ENCODE measurements at regions of chr18 and their contacts with region 1.

Region 1: GRCh38 chr18:48675352-48675761 is 136.5 kb downstream of the CTIF start:
- DNase-seq: peak; percentile 85
- ATAC-seq: peak; percentile 93
- H3K4me3 ChIP-seq: no peak overlapping the region
- H3K4me3 Mint-ChIP-seq: no peak overlapping the region
- H3K27ac ChIP-seq: no peak overlapping the region
- H3K27ac Mint-ChIP-seq: no peak overlapping the region
- H3K4me1 ChIP-seq: peaks cover 4 to 12% of the 10 kb centered on the region in 2 donors
- H3K4me1 Mint-ChIP-seq: peaks cover 10% of the 10 kb centered on the region
- H3K27me3 ChIP-seq: no peaks in the 10 kb centered on the region
- H3K27me3 Mint-ChIP-seq: no peaks in the 10 kb centered on the region
- CTCF ChIP-seq: peak; percentile 95

Region 2: DNA sequence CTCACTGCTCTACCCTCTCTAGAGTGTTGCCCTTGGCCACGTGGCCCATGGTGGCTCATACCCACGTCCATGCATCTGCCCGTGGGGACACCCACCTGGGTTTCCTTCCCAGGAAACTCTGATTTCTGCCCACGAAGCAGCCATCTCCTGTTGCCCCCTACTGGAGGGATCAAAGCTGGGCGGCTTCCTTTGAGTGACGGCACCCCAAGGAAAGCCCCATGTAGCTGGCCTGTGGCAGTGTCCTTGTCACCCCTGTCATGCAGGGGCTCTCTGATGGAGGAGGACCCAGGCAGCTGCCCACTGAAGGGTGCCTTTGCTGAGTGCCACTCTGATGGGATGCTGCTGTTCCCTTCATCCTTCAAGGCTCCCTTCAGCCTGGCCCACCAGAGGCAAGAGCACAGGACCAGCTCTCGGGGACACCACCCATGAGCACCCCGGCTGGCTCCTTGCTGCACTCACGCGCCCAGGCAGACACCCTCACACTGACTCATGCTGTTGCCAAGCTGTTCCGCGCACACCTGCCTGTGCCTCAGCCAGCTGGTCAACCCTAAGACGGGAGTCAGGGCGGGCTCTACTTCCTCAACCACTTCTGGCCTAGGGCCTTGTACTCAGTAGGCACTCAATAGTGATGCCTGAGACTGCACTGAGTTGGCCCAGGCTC is 35.5 kb before region 1 on chr18:
- CTCF ChIA-PET with region 1: no interaction called
- POLR2A ChIA-PET with region 1: no interaction called
- intact Hi-C with region 1: no loop called
- DNase-seq: no peak
- ATAC-seq: no peak
- H3K4me3 ChIP-seq: no peak overlapping the region
- H3K4me3 Mint-ChIP-seq: no peak overlapping the region
- H3K27ac ChIP-seq: no peak overlapping the region
- H3K27ac Mint-ChIP-seq: no peak overlapping the region
- H3K4me1 ChIP-seq: no peaks in the 10 kb centered on the region
- H3K4me1 Mint-ChIP-seq: no peaks in the 10 kb centered on the region
- H3K27me3 ChIP-seq: no peaks in the 10 kb centered on the region
- H3K27me3 Mint-ChIP-seq: no peaks in the 10 kb centered on the region
- CTCF ChIP-seq: no peak

Region 3: GRCh38 chr18:48913201-48913600 is 237.8 kb after region 1 on chr18:
- CTCF ChIA-PET with region 1: no interaction called
- POLR2A ChIA-PET with region 1: no interaction called
- intact Hi-C with region 1: loop called (anchors 1 kb)
- DNase-seq: peak; percentile 37
- ATAC-seq: peak; percentile 63
- H3K4me3 ChIP-seq: no peak overlapping the region
- H3K4me3 Mint-ChIP-seq: no peak overlapping the region
- H3K27ac ChIP-seq: no peak overlapping the region
- H3K27ac Mint-ChIP-seq: no peak overlapping the region
- H3K4me1 ChIP-seq: peaks cover 0 to 6% of the 10 kb centered on the region in 2 donors
- H3K4me1 Mint-ChIP-seq: peaks cover 8% of the 10 kb centered on the region
- H3K27me3 ChIP-seq: no peaks in the 10 kb centered on the region
- H3K27me3 Mint-ChIP-seq: no peaks in the 10 kb centered on the region
- CTCF ChIP-seq: peak; percentile 16

Region 4: DNA sequence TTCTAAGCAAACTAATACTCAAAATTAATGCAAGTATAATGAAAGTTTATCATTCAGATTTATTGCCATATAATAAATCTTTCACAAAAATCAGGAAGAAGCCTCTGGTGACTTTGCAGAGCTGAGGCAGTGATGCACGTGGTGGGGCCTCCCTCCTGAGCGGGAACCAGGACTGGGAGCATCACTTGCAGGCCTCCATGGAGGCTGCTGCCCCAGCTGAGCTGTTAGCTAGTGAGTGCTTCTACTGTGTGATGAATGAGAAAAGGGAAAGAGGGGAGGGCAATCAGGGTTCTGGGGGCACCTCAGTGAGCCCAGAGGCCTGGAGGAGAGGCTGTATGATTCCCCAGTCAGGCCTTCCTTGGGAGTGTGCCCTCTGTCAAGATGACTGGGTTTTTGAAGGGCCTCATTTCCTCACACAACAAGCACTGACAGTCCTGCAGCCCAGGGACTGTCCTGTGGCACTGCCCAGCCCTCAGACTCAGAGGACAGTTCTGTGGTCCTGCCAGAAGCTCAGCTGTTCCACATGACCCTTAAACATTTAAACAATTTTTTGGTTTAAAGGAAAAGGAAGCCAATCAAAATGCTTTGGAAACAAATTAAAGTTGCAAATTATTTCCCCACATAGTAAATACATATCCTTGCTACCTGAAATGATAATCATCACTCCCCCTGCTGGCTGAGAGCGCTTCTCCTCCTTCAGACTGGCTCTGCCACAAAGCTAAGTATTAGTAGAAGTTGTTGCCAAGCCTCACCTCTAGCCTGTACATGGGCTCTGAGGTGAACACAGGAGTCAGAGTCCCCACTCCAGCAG is 366.3 kb after region 1 on chr18:
- CTCF ChIA-PET with region 1: interaction called, 12 read pairs
- POLR2A ChIA-PET with region 1: no interaction called
- intact Hi-C with region 1: loop called (anchors 1 kb)
- DNase-seq: peak; percentile 54
- ATAC-seq: peak; percentile 49
- H3K4me3 ChIP-seq: no peak overlapping the region
- H3K4me3 Mint-ChIP-seq: no peak overlapping the region
- H3K27ac ChIP-seq: no peak overlapping the region
- H3K27ac Mint-ChIP-seq: no peak overlapping the region
- H3K4me1 ChIP-seq: no peaks in the 10 kb centered on the region
- H3K4me1 Mint-ChIP-seq: peaks cover 6% of the 10 kb centered on the region
- H3K27me3 ChIP-seq: no peaks in the 10 kb centered on the region
- H3K27me3 Mint-ChIP-seq: no peaks in the 10 kb centered on the region
- CTCF ChIP-seq: peak; percentile 57

Region 5: DNA sequence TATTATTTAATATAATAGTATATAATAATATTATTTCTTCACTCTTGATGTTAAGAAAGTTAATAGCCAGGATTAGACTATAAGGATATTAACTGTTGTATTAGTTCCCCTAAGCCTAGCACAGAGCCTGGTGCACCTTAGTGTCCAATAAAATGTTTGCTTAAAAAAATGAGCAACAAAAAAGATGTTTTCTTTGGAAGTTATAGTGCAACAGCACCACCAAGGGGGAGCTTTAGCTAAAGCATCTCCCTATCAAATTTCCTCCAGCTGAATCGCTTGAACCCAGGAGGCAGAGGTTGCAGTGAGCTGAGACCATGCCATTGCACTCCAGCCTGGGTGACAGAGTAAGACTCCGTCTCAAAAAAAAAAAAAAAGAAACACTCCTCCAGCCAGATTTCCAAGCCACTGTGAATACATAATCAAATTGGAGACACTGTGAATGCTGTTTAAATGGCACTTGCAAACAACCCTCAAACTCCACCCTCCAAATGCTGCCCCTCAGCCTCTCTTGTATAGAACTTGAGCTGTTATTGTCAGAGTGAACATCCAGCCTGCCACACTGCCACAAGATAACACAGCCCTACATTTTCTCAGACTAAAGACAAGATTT is 563.2 kb after region 1 on chr18:
- CTCF ChIA-PET with region 1: interaction called, 17 read pairs
- POLR2A ChIA-PET with region 1: no interaction called
- intact Hi-C with region 1: loop called (anchors 1 kb)
- DNase-seq: peak; percentile 11
- ATAC-seq: no peak
- H3K4me3 ChIP-seq: no peak overlapping the region
- H3K4me3 Mint-ChIP-seq: no peak overlapping the region
- H3K27ac ChIP-seq: no peak overlapping the region
- H3K27ac Mint-ChIP-seq: no peak overlapping the region
- H3K4me1 ChIP-seq: no peaks in the 10 kb centered on the region
- H3K4me1 Mint-ChIP-seq: no peaks in the 10 kb centered on the region
- H3K27me3 ChIP-seq: no peaks in the 10 kb centered on the region
- H3K27me3 Mint-ChIP-seq: no peaks in the 10 kb centered on the region
- CTCF ChIP-seq: peak; percentile 34

Region 6: GRCh38 chr18:49447810-49448745 is 772.7 kb after region 1 on chr18:
- CTCF ChIA-PET with region 1: interaction called, 3 read pairs
- POLR2A ChIA-PET with region 1: no interaction called
- intact Hi-C with region 1: loop called (anchors 1 kb)
- DNase-seq: peak; percentile 51
- ATAC-seq: no peak
- H3K4me3 ChIP-seq: no peak overlapping the region
- H3K4me3 Mint-ChIP-seq: no peak overlapping the region
- H3K27ac ChIP-seq: no peak overlapping the region
- H3K27ac Mint-ChIP-seq: no peak overlapping the region
- H3K4me1 ChIP-seq: no peaks in the 10 kb centered on the region
- H3K4me1 Mint-ChIP-seq: peaks cover 11% of the 10 kb centered on the region
- H3K27me3 ChIP-seq: no peaks in the 10 kb centered on the region
- H3K27me3 Mint-ChIP-seq: no peaks in the 10 kb centered on the region
- CTCF ChIP-seq: peak; percentile 58

Region 7: DNA sequence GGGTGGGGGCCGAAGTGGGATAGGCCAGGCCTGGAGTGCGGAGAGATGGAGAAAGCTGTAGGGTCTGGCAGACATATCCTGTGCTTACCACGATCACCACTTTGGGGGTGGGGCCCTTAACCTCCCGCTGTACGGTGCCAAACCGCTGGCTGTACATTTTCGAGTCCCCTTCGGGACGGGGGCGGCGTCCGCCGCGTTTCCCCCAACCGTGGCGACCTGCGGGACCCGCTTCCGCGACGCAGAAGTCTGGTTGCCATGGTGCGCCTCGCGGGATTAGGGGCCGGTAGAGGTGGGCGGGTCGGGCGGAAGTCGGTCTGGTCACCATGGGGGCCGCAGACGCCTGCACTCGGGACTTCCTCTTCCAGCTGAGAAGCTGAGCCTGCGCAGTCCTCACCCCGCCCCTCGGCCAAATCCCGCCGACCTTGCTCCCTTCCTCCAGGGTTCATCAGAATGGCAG is 1590.9 kb after region 1 on chr18 and contains the start of gene CFAP53:
- CTCF ChIA-PET with region 1: no interaction called
- POLR2A ChIA-PET with region 1: no interaction called
- intact Hi-C with region 1: loop called (anchors 2 kb)
- DNase-seq: peak; percentile 96
- ATAC-seq: peak; percentile 79
- H3K4me3 ChIP-seq: peak within 1 kb of the TSS; percentile 55 to 78 (median 66)
- H3K4me3 Mint-ChIP-seq: peak within 1 kb of the TSS; percentile 93
- H3K27ac ChIP-seq: peak within 1 kb of the TSS; percentile 57 to 81
- H3K27ac Mint-ChIP-seq: peak within 1 kb of the TSS; percentile 93
- H3K4me1 ChIP-seq: peaks cover 15 to 28% of the 10 kb centered on the region in 2 donors
- H3K4me1 Mint-ChIP-seq: peaks cover 23% of the 10 kb centered on the region
- H3K27me3 ChIP-seq: no peaks in the 10 kb centered on the region
- H3K27me3 Mint-ChIP-seq: no peaks in the 10 kb centered on the region
- CTCF ChIP-seq: no peak
- total RNA-seq, gene CFAP53: 0.75 and 0.79 TPM in 2 replicates

Measured in B cell (primary cell).